Heart left ventricle (tissue), 16 donors: ENCODE measurements at regions of chr18 and their contacts with region 1.

Region 1: GRCh38 chr18:11324956-11325873 is 175.8 kb upstream of the PIEZO2 start:
- DNase-seq: no peak
- ATAC-seq: no peak
- H3K4me3 ChIP-seq: no peak overlapping the region
- H3K27ac ChIP-seq: no peak overlapping the region
- H3K4me1 ChIP-seq: peaks cover 0 to 8% (median 0%) of the 10 kb centered on the region in 12 donors
- H3K27me3 ChIP-seq: no peaks in the 10 kb centered on the region
- CTCF ChIP-seq: no peak
- POLR2A ChIP-seq: no peak

Region 2: DNA sequence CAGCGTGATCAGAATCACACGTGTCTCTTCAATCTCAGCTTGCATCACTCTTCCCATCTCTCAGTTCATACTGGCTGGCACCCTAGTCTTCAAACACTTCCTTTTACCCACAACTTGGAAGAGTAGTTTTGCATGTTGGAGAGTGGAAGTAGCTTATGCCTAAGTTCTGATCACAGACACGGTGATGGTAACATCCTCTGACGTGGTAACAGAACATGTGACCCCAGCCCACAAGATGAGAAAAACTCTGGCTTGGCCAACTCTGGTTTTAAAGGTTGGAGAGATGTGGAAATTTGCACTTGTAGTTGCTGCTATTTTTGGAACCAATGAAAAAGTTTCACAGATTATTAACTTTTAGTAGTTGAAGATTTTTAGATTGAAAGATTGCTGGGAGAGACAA is 128.8 kb after region 1 on chr18:
- intact Hi-C with region 1: no loop called
- DNase-seq: no peak
- ATAC-seq: no peak
- H3K4me3 ChIP-seq: no peak overlapping the region
- H3K27ac ChIP-seq: no peak overlapping the region
- H3K4me1 ChIP-seq: no peaks in the 10 kb centered on the region
- H3K27me3 ChIP-seq: no peaks in the 10 kb centered on the region
- CTCF ChIP-seq: no peak
- POLR2A ChIP-seq: no peak

Region 3: GRCh38 chr18:11518788-11519685 is 193.8 kb after region 1 on chr18:
- intact Hi-C with region 1: loop called in 1 of 10 experiments (anchors 10 kb)
- DNase-seq: peak in 2 of 5 donors; percentile 42 to 67
- ATAC-seq: peak in 3 of 4 donors; percentile 48 to 69 (median 65)
- H3K4me3 ChIP-seq: no peak overlapping the region
- H3K27ac ChIP-seq: no peak overlapping the region
- H3K4me1 ChIP-seq: peaks cover 0 to 5% (median 0%) of the 10 kb centered on the region in 12 donors
- H3K27me3 ChIP-seq: no peaks in the 10 kb centered on the region
- CTCF ChIP-seq: peak; percentile 30 to 64 (median 52)
- POLR2A ChIP-seq: no peak